ENCODE measurements at regions of chr16 and their contacts with region 1.

Region 1: DNA sequence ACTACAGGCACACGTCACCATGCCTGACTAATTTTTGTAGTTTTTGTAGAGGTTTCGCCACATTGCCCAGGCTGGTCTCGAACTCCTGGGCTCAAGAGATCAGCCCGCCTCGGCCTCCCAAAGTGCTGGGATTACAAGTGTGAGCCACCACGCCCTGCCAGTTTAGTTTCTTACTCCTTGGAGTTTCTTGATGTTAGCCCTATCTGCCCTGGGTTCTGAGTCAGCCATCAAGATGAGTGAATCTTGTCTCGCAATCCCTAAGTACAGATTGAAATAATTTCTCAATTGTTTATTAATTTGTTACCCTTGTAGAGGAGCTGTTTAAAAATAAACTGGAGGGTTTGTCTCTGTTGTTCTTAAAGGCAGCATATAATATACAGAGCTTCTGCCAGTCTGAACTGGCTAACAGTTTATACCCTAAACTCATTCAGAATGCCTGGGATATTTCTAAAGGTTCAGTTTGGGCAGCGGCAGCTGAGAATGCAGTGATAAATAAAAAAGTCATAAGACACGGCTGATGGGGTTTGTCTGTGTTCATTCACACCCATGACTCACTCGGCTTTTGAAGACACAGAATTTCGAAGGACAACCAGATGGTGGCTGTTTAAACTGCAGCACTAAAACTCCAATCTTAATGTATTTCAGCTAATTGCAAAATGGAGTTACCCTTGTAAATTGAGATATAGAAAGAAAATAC is 39.6 kb downstream of the GPRC5B start:
- DNase-seq: peak; percentile 78
- H3K4me3 ChIP-seq: no peak overlapping the region
- H3K27ac ChIP-seq: peak overlapping the region; percentile 86
- H3K27me3 ChIP-seq: no peaks in the 10 kb centered on the region
- CTCF ChIP-seq: no peak

Region 2: GRCh38 chr16:19831678-19832077 is 13.4 kb before region 1 on chr16:
- CTCF ChIA-PET with region 1: no interaction called
- POLR2A ChIA-PET with region 1: interaction called, 13 read pairs
- DNase-seq: peak; percentile 42
- H3K4me3 ChIP-seq: no peak overlapping the region
- H3K27ac ChIP-seq: no peak overlapping the region
- H3K27me3 ChIP-seq: no peaks in the 10 kb centered on the region
- CTCF ChIP-seq: no peak